Heart right ventricle (tissue), 16 donors: ENCODE measurements at regions of chr11 and their contacts with region 1.

Region 1: GRCh38 chr11:68839054-68839865 is 2.5 kb downstream of the CPT1A start:
- DNase-seq: peak; percentile 93 to 97
- ATAC-seq: peak; percentile 77 to 92 (median 88)
- H3K4me3 ChIP-seq: peak overlapping the region in 9 of 10 donors; percentile 74 to 98 (median 91)
- H3K27ac ChIP-seq: peak overlapping the region; percentile 85 to 99 (median 90)
- H3K4me1 ChIP-seq: peaks cover 21 to 84% (median 74%) of the 10 kb centered on the region in 9 donors
- H3K27me3 ChIP-seq: no peaks in the 10 kb centered on the region
- CTCF ChIP-seq: no peak

Region 2: DNA sequence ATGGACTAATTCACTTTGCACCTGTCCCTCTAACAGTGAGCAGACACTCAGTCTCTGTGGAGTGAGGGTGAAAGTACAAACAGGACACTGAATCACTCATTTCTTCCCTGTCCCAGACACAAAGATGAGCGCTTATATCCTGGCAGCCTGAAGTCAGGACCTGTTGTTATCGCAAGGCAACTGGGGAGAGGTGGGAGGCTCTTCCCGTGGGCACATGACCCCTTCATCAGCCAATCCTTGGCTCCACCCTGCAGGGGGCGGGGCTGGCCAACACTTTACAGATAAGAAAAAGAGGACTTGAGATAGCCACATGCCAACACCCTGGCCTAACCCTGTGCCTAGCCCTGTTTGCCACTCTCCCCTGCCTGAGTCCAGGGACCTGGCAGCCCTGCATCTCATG is 58.4 kb before region 1 on chr11:
- intact Hi-C with region 1: loop called in 3 of 10 experiments (anchors 5 kb)
- DNase-seq: peak; percentile 51 to 74
- ATAC-seq: peak; percentile 44 to 79 (median 74)
- H3K4me3 ChIP-seq: no peak overlapping the region
- H3K27ac ChIP-seq: peak overlapping the region in 5 of 10 donors; percentile 13 to 27 (median 22)
- H3K4me1 ChIP-seq: peaks cover 0 to 44% (median 16%) of the 10 kb centered on the region in 9 donors
- H3K27me3 ChIP-seq: no peaks in the 10 kb centered on the region
- CTCF ChIP-seq: no peak

Region 3: GRCh38 chr11:68806921-68807844 is 32.1 kb before region 1 on chr11:
- intact Hi-C with region 1: loop called in 3 of 10 experiments (anchors 1 to 5 kb)
- DNase-seq: no peak
- ATAC-seq: peak in 1 of 8 donors; percentile 18
- H3K4me3 ChIP-seq: no peak overlapping the region
- H3K27ac ChIP-seq: peak overlapping the region in 1 of 10 donors; percentile 20
- H3K4me1 ChIP-seq: peaks cover 2 to 22% (median 19%) of the 10 kb centered on the region in 9 donors
- H3K27me3 ChIP-seq: no peaks in the 10 kb centered on the region
- CTCF ChIP-seq: no peak

Region 4: DNA sequence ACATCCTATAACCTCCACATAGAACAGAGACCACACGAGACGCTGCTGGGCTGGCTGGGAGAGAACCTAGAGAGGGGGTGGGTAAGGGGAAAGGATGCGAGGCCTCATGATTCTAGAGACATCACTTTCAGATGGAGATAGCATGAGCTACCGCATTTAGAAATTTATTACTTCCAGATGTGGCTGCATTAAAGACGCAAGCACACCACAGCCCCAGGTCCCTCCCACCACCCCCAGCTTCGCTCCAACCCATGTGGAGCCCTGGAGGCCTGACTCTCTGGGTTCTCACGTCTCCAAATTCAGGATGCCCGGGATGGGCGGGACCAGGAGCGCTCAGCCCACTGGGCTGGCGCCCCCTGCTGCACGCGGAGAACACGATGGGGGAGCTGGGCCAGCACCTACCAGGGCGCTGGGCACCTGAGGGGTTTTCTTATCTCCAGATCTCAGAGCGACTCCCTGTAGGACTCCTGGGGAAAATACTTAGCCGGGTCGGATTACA is 50.7 kb after region 1 on chr11:
- intact Hi-C with region 1: loop called in 2 of 10 experiments (anchors 2 to 5 kb)
- DNase-seq: peak; percentile 50 to 77
- ATAC-seq: peak; percentile 61 to 80 (median 72)
- H3K4me3 ChIP-seq: peak overlapping the region in 1 of 10 donors; percentile 36
- H3K27ac ChIP-seq: peak overlapping the region; percentile 59 to 86 (median 84)
- H3K4me1 ChIP-seq: peaks cover 12 to 31% (median 20%) of the 10 kb centered on the region in 9 donors
- H3K27me3 ChIP-seq: no peaks in the 10 kb centered on the region
- CTCF ChIP-seq: peak in 8 of 9 donors; percentile 22 to 68 (median 48)

Region 5: DNA sequence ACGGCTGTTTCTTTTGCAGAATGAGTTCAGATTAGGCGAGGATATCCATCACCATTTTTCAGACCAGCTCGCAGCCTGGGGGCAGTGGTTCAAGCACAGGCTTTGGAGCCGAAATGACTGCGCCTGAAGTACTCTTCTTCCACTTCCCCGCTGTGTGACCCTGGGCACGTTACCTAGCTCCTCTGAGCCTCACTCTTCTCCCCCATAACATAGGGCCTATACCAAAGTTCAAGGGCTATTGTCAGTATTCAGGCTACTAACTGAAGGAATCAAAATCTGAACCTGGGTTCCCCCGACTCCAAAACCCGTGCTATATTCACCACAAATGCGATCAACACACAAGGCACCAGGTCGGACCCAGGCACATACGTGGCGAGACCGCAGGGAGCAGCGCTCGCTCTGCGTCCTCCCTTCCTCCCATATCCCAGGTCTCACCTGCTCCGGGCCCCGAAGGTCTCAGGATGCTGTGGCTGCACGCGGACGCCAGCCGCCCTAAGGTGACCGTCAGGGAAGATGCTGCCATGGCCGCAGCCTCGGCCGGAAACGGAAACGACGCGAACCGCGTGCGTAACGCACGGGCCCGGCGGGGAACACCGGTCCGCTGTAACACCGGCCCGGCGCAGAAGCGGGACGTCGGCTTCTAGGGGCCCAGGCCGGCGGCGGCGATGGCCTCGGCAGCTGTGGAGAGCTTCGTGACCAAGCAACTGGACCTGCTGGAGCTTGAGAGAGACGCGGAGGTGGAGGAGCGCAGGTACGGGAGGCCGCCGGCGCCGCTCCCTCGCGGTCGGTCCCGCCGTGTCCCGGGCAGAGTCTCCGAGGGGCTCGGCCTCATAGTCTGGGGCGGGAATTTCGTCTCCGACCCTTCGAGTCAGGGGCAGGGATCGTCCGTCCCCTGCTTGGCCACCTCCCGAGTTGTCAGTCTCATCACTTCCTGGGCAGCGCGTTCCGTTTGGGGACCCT is 64.3 kb after region 1 on chr11 and contains the starts of genes IGHMBP2 and MRPL21:
- intact Hi-C with region 1: loop called in 1 of 10 experiments (anchors 10 kb)
- DNase-seq: peak; percentile 83 to 84
- ATAC-seq: peak; percentile 94 to 98 (median 97)
- H3K4me3 ChIP-seq: peak within 1 kb of the TSS; percentile 70 to 95 (median 86)
- H3K27ac ChIP-seq: peak within 1 kb of the TSS; percentile 26 to 94 (median 90)
- H3K4me1 ChIP-seq: peaks cover 13 to 43% (median 34%) of the 10 kb centered on the region in 9 donors
- H3K27me3 ChIP-seq: no peaks in the 10 kb centered on the region
- CTCF ChIP-seq: no peak
- total RNA-seq, gene IGHMBP2: 9.0 to 17.7 (median 12.1) TPM
- total RNA-seq, gene MRPL21: 63.2 to 138 (median 96.7) TPM